Activated B cell treated with CpG ODN at 0.5 μM for 24 hours (primary cell): ENCODE measurements at regions of chr15 and their contacts with region 1.

Region 1: GRCh38 chr15:70670680-70671079 is 92.7 kb downstream of the UACA start:
- DNase-seq: no peak
- ATAC-seq: no peak
- H3K4me3 Mint-ChIP-seq: no peak overlapping the region
- H3K27ac Mint-ChIP-seq: no peak overlapping the region
- H3K4me1 Mint-ChIP-seq: peaks cover 7% of the 10 kb centered on the region
- H3K27me3 Mint-ChIP-seq: peaks cover 6% of the 10 kb centered on the region
- CTCF ChIP-seq: no peak

Region 2: GRCh38 chr15:70722266-70723121 is 51.8 kb after region 1 on chr15:
- CTCF ChIA-PET with region 1: interaction called, 3 read pairs
- POLR2A ChIA-PET with region 1: no interaction called
- intact Hi-C with region 1: loop called (anchors 10 kb)
- DNase-seq: no peak
- ATAC-seq: no peak
- H3K4me3 Mint-ChIP-seq: no peak overlapping the region
- H3K27ac Mint-ChIP-seq: no peak overlapping the region
- H3K4me1 Mint-ChIP-seq: no peaks in the 10 kb centered on the region
- H3K27me3 Mint-ChIP-seq: peaks cover 9% of the 10 kb centered on the region
- CTCF ChIP-seq: peak; percentile 53